WTC11 (cell line): ENCODE measurements at regions of chr10 and their contacts with region 1.

Region 1: DNA sequence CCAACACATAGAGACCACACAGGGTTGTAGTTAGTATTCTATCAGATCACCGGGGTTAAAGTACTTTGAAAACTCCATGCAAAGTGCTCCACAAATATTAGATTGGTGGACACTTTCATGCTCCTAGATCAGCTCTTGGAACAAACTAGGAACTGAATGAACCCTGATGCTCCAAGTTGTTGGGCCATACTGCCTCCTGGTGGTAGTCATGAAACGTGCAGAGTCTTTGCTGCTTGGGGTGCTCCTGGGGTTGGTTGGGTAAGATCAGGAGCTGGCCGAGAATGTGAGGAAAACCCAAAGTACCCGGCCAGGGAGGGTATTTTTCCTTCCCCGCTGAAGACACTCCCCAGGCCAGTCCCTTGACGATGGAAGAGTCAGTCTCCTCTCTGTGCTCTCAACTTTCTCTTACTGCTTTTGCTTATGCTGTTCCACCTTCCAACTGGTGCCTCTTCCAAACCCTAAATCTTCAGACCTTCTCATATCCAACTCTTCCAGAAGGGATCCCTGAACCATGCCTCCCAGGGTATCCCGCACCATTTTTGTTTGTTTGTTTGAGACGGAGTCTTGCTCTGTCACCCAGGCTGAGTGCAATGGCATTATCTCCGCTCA is 920 bp upstream of the RPEL1 start:
- DNase-seq: peak; percentile 82
- ATAC-seq: peak; percentile 88
- H3K4me3 Mint-ChIP-seq: no peak overlapping the region
- H3K27ac Mint-ChIP-seq: no peak overlapping the region
- H3K4me1 Mint-ChIP-seq: peaks cover 19% of the 10 kb centered on the region
- H3K27me3 Mint-ChIP-seq: no peaks in the 10 kb centered on the region; the same call in 1 of the 2 replicates
- CTCF ChIP-seq: peak; percentile 85

Region 2: GRCh38 chr10:102835007-102835482 is 409.7 kb before region 1 on chr10:
- CTCF ChIA-PET with region 1: interaction called, 13 read pairs
- POLR2A ChIA-PET with region 1: no interaction called
- DNase-seq: peak; percentile 89
- ATAC-seq: peak; percentile 99
- H3K4me3 Mint-ChIP-seq: no peak overlapping the region
- H3K27ac Mint-ChIP-seq: no peak overlapping the region
- H3K4me1 Mint-ChIP-seq: 0 out of 2 replicates have a peak, but pooled peaks cover 5% of the 10 kb centered on the region
- H3K27me3 Mint-ChIP-seq: peaks cover 18% of the 10 kb centered on the region
- CTCF ChIP-seq: peak; percentile 89

Region 3: GRCh38 chr10:103069453-103070331 is 175.1 kb before region 1 on chr10:
- CTCF ChIA-PET with region 1: interaction called, 25 read pairs
- POLR2A ChIA-PET with region 1: no interaction called
- DNase-seq: peak; percentile 80
- ATAC-seq: peak; percentile 89
- H3K4me3 Mint-ChIP-seq: no peak overlapping the region
- H3K27ac Mint-ChIP-seq: no peak overlapping the region
- H3K4me1 Mint-ChIP-seq: peaks cover 6% of the 10 kb centered on the region; the same call in 1 of the 2 replicates
- H3K27me3 Mint-ChIP-seq: no peaks in the 10 kb centered on the region
- CTCF ChIP-seq: peak; percentile 58

Region 4: GRCh38 chr10:103083266-103083976 is 161.3 kb before region 1 on chr10:
- CTCF ChIA-PET with region 1: interaction called, 25 read pairs
- POLR2A ChIA-PET with region 1: no interaction called
- DNase-seq: no peak
- ATAC-seq: no peak
- H3K4me3 Mint-ChIP-seq: no peak overlapping the region
- H3K27ac Mint-ChIP-seq: no peak overlapping the region
- H3K4me1 Mint-ChIP-seq: no peaks in the 10 kb centered on the region
- H3K27me3 Mint-ChIP-seq: no peaks in the 10 kb centered on the region
- CTCF ChIP-seq: no peak

Region 5: GRCh38 chr10:103111031-103111917 is 133.5 kb before region 1 on chr10:
- CTCF ChIA-PET with region 1: interaction called, 46 read pairs
- POLR2A ChIA-PET with region 1: no interaction called
- DNase-seq: no peak
- ATAC-seq: no peak
- H3K4me3 Mint-ChIP-seq: no peak overlapping the region
- H3K27ac Mint-ChIP-seq: peak overlapping the region; percentile 38
- H3K4me1 Mint-ChIP-seq: peaks cover 29% of the 10 kb centered on the region
- H3K27me3 Mint-ChIP-seq: no peaks in the 10 kb centered on the region
- CTCF ChIP-seq: no peak

Region 6: DNA sequence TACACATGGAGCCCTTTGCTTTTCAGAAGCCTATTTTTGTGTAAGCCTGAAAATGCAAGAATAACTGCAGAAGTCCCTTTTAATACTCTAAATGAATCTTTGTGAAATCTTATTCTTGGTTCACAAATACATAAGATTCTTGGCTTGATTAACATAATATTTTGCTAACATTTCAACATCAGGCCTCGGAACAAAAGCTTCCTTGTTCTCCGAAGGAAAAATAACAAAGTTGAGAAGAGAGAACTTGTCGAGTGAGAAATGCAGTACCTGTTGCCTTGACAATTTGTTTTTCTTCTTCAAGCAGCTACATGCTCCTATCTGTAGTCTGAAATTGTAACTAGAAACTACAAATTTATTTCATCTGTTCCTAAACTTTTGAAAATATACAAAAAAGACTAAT is 60.2 kb before region 1 on chr10:
- CTCF ChIA-PET with region 1: interaction called, 13 read pairs
- POLR2A ChIA-PET with region 1: no interaction called
- DNase-seq: no peak
- ATAC-seq: no peak
- H3K4me3 Mint-ChIP-seq: no peak overlapping the region
- H3K27ac Mint-ChIP-seq: peak overlapping the region; percentile 75; the same call in 1 of the 2 replicates
- H3K4me1 Mint-ChIP-seq: peaks cover 35% of the 10 kb centered on the region
- H3K27me3 Mint-ChIP-seq: no peaks in the 10 kb centered on the region
- CTCF ChIP-seq: no peak

Region 7: GRCh38 chr10:103231047-103231551 is 13.7 kb before region 1 on chr10:
- CTCF ChIA-PET with region 1: interaction called, 27 read pairs
- POLR2A ChIA-PET with region 1: interaction called, 6 read pairs
- DNase-seq: peak; percentile 51
- ATAC-seq: peak; percentile 90
- H3K4me3 Mint-ChIP-seq: no peak overlapping the region
- H3K27ac Mint-ChIP-seq: peak overlapping the region; percentile 96
- H3K4me1 Mint-ChIP-seq: peaks cover 36% of the 10 kb centered on the region
- H3K27me3 Mint-ChIP-seq: no peaks in the 10 kb centered on the region
- CTCF ChIP-seq: no peak

Region 8: DNA sequence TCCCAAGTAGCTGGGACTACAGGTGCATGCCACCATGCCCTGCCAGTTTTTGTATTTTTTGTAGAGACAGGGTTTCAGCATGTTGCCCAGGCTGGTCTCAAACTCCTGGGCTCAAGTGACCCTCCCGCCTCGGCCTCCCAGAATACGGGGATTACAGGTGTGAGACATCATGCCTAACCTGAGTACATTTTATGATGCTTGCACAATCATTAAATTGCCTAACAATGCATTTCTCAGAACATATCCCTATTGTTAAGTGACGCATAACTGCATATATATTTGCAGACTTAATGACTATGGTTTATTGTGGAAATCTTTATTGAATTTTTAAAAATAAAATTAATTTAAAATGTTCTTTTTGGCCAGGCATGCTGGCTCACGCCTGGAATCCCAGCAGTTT is 62.8 kb after region 1 on chr10:
- CTCF ChIA-PET with region 1: no interaction called
- POLR2A ChIA-PET with region 1: no interaction called
- DNase-seq: no peak
- ATAC-seq: no peak
- H3K4me3 Mint-ChIP-seq: no peak overlapping the region
- H3K27ac Mint-ChIP-seq: no peak overlapping the region
- H3K4me1 Mint-ChIP-seq: no peaks in the 10 kb centered on the region
- H3K27me3 Mint-ChIP-seq: no peaks in the 10 kb centered on the region
- CTCF ChIP-seq: no peak